ENCODE measurements at regions of chr16 and their contacts with region 1.

Region 1: DNA sequence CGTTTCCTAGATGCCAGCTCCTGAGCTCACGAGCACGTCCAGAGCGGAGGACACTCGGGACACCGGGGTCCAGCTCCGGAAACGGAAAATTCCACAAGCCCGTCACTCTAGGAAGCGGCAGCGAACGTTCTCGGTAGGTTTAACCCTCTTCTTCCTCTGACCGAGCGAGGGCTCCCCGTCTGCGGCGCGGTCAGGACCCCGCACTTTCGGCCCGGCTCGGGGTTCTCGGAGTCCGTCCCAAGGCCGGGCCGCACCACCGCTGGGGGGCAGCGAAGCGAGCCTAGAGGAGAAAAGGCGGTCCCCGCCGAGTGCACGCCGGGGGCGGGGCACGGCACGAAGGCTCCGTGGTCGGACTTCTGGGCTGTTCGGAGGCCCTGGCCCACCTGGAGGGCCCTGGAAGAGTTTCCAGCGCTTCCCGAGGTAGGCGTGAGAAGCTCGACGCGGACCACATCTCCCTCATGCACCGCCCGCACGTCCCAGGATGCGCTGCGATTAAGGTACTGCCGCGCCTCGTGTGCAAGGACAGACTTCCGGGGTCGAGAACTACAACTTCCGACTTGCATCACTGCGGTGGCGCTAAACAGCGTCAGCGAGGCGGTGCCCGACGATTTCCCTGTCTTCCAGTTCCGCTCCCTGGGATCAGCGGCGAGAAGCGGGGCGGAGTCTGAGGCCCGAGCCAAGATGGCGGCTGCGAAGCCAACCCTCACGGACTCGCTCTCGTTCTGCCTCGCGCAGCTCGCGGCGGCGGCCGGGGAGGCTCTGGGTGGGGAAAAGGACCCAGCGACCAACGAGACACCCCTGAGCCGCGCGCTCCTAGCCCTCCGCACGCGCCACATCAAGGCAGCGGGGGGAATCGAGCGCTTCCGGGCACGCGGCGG is at the start of gene ARMC5:
- DNase-seq: peak; percentile 99
- H3K4me3 Mint-ChIP-seq: peak within 1 kb of the TSS; percentile 87
- H3K27ac Mint-ChIP-seq: peak within 1 kb of the TSS; percentile 94
- H3K4me1 Mint-ChIP-seq: peaks cover 41% of the 10 kb centered on the region
- H3K27me3 Mint-ChIP-seq: no peaks in the 10 kb centered on the region
- total RNA-seq, gene ARMC5: 6.3 to 6.7 TPM

Region 2: GRCh38 chr16:30957456-30958174 is 501.5 kb before region 1 on chr16 and contains the start of gene SETD1A:
- CTCF ChIA-PET with region 1: no interaction called
- intact Hi-C with region 1: loop called (anchors 1 kb)
- DNase-seq: peak; percentile 99
- H3K4me3 Mint-ChIP-seq: peak within 1 kb of the TSS; percentile 93
- H3K27ac Mint-ChIP-seq: peak within 1 kb of the TSS; percentile 99
- H3K4me1 Mint-ChIP-seq: peaks cover 27% of the 10 kb centered on the region
- H3K27me3 Mint-ChIP-seq: no peaks in the 10 kb centered on the region
- total RNA-seq, gene SETD1A: 14.3 to 14.6 TPM

Region 3: DNA sequence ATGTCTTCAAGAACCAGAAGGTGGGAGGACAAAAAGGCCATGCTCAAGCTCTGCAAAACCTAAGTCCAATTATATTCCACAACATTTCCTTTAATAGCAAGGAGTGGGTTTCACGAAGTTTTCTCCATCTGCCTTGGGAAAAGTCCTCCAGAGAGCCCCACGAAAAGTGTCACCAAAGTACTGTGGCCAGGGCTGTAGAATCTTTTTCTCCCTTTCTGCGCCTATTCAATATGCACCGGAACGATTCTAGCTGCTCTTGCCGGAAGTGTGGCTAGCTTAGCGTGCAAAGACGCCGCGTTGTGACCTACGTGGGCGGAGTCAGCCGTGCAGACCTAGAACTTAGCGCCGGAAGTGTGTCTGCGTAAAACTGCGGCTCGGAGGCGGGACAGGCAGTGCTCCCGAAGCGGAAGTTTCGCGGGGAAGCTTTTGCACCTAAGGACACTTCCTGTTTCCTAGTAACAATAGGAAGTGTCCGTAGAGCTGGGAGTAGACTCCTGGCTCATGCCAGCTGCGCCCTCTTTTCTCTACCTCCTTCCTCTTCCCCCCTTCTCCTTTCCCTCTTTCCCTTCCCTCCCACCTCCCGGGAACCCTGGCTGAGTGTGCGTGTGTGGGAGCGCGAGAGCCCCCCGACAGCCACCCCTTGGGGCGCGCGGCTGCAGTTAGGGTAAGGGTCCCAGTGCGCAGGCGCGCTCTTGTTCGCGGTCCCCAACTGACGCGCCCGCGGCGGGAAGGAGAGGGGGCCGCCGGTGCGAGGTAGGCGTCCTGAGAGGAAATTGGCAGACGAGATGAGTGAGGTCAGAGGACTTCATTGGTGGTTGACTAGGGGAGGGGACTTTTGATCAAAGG is 384.9 kb before region 1 on chr16 and contains the starts of genes ZNF646 and ZNF668:
- CTCF ChIA-PET with region 1: no interaction called
- intact Hi-C with region 1: loop called (anchors 1 kb)
- DNase-seq: peak; percentile 99
- H3K4me3 Mint-ChIP-seq: peak within 1 kb of the TSS; percentile 94
- H3K27ac Mint-ChIP-seq: peak within 1 kb of the TSS; percentile 93
- H3K4me1 Mint-ChIP-seq: peaks cover 31% of the 10 kb centered on the region
- H3K27me3 Mint-ChIP-seq: no peaks in the 10 kb centered on the region
- total RNA-seq, gene ZNF646: 16.7 to 17.4 TPM
- total RNA-seq, gene ZNF668: 9.5 to 10.1 TPM

Region 4: DNA sequence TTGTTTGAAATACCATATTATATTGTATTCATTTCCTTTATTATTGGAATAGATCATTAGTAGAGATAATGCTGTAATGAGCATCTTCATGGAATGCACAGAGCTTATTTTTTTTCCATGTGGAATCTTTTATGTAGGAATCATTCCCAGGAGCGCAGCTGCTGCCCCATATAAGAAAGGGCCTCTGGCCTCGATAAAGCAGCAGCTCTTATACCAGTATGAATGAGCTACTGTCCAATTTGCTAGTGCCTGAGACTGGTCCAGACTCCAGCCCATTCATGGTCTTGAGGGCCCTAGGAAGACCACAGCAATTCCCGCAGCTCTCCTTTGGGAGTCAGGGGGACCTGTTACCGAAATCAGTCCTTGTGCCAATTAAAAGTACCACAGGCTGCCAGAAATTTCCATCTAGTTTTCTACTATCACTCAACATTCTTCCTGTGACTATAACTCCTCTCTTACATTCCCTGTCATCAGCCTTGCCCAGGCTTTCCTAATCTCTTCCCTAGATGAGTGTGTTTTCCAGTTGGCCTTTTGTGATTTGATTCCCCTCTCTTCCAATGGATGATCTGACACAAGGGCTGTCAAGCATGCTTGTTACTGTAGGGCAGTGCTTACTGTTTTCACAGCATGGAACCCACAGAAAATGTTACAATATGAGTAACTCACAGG is 18.4 kb before region 1 on chr16:
- CTCF ChIA-PET with region 1: interaction called, 14 read pairs
- intact Hi-C with region 1: no loop called
- DNase-seq: no peak
- H3K4me3 Mint-ChIP-seq: no peak overlapping the region
- H3K27ac Mint-ChIP-seq: no peak overlapping the region
- H3K4me1 Mint-ChIP-seq: peaks cover 9% of the 10 kb centered on the region
- H3K27me3 Mint-ChIP-seq: no peaks in the 10 kb centered on the region

Region 5: GRCh38 chr16:31568577-31569359 is 109.7 kb after region 1 on chr16:
- CTCF ChIA-PET with region 1: no interaction called
- intact Hi-C with region 1: loop called (anchors 5 kb)
- DNase-seq: peak; percentile 34
- H3K4me3 Mint-ChIP-seq: peak overlapping the region; percentile 37
- H3K27ac Mint-ChIP-seq: no peak overlapping the region
- H3K4me1 Mint-ChIP-seq: peaks cover 7% of the 10 kb centered on the region
- H3K27me3 Mint-ChIP-seq: peaks cover 40% of the 10 kb centered on the region

Region 6: DNA sequence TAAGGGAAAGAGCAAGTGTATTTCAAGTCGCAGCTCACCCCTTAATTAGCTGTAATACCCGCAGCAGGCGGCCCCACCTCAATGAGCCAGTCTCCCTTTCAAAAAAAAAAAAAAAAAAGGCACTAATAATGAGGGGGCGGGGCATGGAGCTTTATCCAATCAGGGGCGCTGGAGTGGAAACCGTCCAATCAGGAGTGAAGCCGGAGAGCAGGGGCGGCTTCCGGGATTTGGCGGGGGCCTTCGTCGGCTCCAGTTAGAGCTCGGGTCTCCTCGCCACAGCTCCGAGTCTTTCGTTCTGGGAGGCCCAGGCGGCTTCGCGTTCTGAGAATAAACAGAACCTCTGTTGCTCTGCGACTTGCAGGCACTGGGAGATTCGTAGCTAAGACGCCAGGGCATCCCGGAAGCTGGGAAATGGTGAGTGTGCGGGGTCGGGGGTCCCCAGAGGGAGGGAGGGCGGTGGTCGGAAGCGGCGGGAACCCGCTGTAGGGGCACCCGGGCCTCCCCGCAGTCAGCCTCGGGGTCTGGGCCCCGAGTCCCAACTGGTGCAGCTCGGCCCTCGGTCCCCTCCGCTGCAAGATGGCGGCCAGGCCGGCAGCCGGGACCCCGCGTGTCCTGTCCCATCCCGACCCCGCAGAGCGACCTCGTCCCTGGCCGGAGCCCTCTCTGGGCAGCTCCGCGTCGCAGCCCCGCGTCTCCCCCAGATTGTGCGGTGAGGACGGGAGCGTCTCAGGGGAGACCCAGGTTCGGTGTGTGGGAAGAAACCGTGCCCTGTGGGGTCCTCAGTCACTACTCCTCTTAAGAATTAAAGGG is 414.7 kb after region 1 on chr16 and contains the start of gene ZNF267:
- CTCF ChIA-PET with region 1: interaction called, 8 read pairs
- intact Hi-C with region 1: loop called (anchors 1 kb)
- DNase-seq: peak; percentile 97
- H3K4me3 Mint-ChIP-seq: peak within 1 kb of the TSS; percentile 88
- H3K27ac Mint-ChIP-seq: peak within 1 kb of the TSS; percentile 96
- H3K4me1 Mint-ChIP-seq: peaks cover 79% of the 10 kb centered on the region
- H3K27me3 Mint-ChIP-seq: no peaks in the 10 kb centered on the region
- total RNA-seq, gene ZNF267: 58.7 to 59.7 TPM

Measured in activated naive CD4-positive, alpha-beta T cell treated with anti-CD3 and anti-CD28 coated beads for 36 hours (primary cell).